ENCODE measurements at regions of chr12 and their contacts with region 1.

Region 1: GRCh38 chr12:54240971-54241588 is 38.8 kb downstream of the CBX5 start:
- DNase-seq: no peak

Region 2: DNA sequence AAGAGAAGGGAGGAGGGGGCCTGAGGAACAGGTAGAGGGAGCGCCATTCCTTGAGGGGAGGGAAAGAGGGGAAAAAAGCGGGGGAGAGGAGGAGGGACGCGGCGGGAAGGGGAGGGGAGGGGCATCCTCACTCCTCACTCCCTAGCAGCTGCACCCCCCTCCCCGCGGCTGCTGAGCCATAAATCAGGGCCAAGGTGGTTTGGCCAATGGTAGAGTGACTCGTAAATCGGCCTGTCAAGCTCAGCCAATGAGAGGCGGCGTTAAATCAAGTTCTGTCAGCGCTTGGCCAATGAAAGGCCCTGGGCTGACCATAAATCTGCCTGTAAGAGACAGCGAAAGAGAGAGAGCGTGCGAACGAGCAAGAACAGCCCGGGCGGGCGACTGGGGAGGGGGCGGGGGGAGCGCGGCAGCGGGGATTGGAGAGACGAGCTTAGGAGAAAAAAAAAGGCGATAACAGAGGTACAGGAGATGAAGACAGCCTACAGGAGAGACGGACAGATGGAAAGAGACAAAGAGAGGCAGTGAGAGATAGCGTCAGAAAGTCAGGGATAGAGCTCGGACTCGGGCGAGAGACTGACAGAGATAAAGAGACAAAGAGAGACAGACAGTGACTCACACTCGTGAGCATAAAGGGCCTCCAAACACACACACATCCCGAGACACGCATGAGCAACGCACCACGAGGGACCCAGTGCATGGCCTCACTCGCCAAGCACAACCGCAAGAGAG is 118.1 kb after region 1 on chr12:
- intact Hi-C with region 1: loop called in 1 of 2 experiments (anchors 10 kb)
- DNase-seq: peak; percentile 97

Region 3: DNA sequence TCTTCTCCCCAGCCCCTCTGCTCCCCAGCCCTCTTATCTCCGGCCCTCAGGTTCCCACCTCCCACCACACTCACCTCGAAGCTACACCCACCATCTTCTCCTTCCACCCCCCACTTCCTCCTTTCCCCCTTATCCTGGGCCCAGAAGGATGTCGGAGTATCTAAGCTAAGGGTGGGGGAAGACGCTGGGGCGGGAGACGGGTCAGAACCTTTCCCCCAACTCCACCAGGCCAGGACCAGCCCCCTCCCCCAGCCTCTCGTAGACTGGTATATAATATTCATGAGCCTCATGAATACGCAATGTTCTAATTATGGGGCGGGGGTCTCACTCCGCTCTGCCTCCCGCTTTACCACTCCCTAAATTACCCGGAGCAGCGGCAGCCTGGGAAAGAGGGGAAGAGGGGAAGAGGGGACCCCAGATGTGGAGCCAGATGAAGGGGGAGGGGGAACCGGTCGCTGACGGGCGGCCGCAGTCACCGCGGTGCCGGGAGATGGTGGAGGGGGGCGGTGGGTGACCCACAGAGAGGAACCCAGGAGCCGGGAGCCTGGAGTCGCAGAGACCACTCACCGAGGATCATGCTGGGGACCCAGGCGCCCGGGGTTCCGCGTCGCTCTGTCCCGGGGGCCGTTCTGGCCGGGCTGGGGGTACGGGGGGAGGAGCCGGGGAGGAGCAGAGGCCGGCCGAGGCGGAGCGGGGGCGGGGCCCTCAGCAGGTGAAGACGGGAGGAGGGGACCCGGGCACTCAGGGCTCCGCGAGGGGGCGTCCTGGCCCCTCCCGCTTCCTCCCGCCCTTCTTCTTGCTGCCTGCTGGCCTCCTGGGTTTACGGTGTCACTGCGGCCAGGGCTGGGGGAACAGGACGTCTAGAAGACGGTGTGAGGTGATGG is 149.8 kb after region 1 on chr12:
- intact Hi-C with region 1: no loop called
- DNase-seq: no peak

Measured in posterior vena cava (tissue), 2 donors.